CD4-positive, alpha-beta T cell (primary cell): ENCODE measurements at regions of chr1 and their contacts with region 1.

Region 1: GRCh38 chr1:241847796-241848685 is at the start of gene EXO1:
- DNase-seq: peak; percentile 75 to 95 (median 85)
- ATAC-seq: peak; percentile 96
- H3K4me3 ChIP-seq: peak within 1 kb of the TSS; percentile 98
- H3K4me3 Mint-ChIP-seq: peak within 1 kb of the TSS; percentile 99
- H3K27ac ChIP-seq: peak within 1 kb of the TSS; percentile 95 to 100
- H3K27ac Mint-ChIP-seq: peak within 1 kb of the TSS; percentile 99
- H3K4me1 ChIP-seq: peaks cover 12% of the 10 kb centered on the region
- H3K4me1 Mint-ChIP-seq: peaks cover 19% of the 10 kb centered on the region
- H3K27me3 ChIP-seq: no peaks in the 10 kb centered on the region
- H3K27me3 Mint-ChIP-seq: no peaks in the 10 kb centered on the region
- CTCF ChIP-seq: peak; percentile 47
- total RNA-seq, gene EXO1: 0.25 to 1.1 TPM

Region 2: DNA sequence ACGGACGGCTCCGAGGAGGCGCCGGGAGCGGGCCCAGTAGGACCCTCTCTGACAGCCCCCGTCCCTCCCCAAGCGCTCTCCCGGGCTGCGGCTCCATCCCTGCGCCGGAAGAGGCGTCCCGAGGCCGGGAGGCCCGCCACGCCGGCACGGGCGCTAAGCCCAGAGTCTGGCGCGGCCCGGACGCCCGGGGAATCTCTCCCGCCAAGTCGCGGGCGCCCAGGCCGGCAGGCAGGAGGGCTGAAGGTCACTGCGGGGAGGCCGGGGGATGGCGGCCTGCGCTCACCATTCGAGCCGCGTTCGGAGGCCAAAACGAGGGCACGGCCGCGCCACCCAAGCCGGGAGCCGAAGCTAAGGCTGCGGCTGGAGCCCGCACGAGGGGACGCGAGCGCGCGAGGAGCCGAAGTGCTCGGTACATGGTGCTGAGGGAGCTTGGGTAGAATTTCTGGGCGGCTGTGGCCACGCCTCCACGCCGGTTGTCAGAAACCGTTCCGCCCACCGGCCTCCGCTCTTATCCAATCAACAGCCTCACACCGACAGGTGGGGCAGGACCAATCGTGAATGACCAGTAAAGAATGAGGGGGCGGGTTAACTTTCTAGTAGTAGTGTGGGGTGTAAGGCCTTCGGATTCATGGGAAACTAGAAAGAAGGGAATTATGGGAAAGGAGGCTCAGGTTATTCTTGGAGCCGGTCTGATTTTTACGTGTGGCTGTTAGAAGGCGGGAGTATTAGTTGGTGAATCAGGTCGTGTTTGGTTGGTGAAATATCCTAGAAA is 328.5 kb before region 1 on chr1 and contains the start of gene FH:
- CTCF ChIA-PET with region 1: no interaction called
- POLR2A ChIA-PET with region 1: interaction called, 4 read pairs
- intact Hi-C with region 1: loop called (anchors 2 to 5 kb)
- DNase-seq: peak; percentile 82 to 98 (median 91)
- ATAC-seq: peak; percentile 97
- H3K4me3 ChIP-seq: peak within 1 kb of the TSS; percentile 64
- H3K4me3 Mint-ChIP-seq: peak within 1 kb of the TSS; percentile 97
- H3K27ac ChIP-seq: peak within 1 kb of the TSS in 1 of 2 donors; percentile 70
- H3K27ac Mint-ChIP-seq: peak within 1 kb of the TSS; percentile 85
- H3K4me1 ChIP-seq: peaks cover 5% of the 10 kb centered on the region
- H3K4me1 Mint-ChIP-seq: peaks cover 32% of the 10 kb centered on the region
- H3K27me3 ChIP-seq: peaks cover 8% of the 10 kb centered on the region in 2 experiments
- H3K27me3 Mint-ChIP-seq: peaks cover 25% of the 10 kb centered on the region
- CTCF ChIP-seq: no peak
- total RNA-seq, gene FH: 13.0 to 16.9 TPM

Region 3: GRCh38 chr1:241627453-241628259 is 220.4 kb before region 1 on chr1:
- CTCF ChIA-PET with region 1: no interaction called
- POLR2A ChIA-PET with region 1: interaction called, 4 read pairs
- intact Hi-C with region 1: loop called in 1 of 2 experiments (anchors 5 kb)
- DNase-seq: peak in 10 of 14 experiments; percentile 8 to 82 (median 40)
- ATAC-seq: peak; percentile 89
- H3K4me3 ChIP-seq: peak overlapping the region; percentile 30
- H3K4me3 Mint-ChIP-seq: peak overlapping the region; percentile 88
- H3K27ac ChIP-seq: peak overlapping the region; percentile 13 to 59
- H3K27ac Mint-ChIP-seq: peak overlapping the region; percentile 94
- H3K4me1 ChIP-seq: peaks cover 2% of the 10 kb centered on the region
- H3K4me1 Mint-ChIP-seq: peaks cover 24% of the 10 kb centered on the region
- H3K27me3 ChIP-seq: no peaks in the 10 kb centered on the region
- H3K27me3 Mint-ChIP-seq: no peaks in the 10 kb centered on the region
- CTCF ChIP-seq: peak; percentile 88

Region 4: GRCh38 chr1:241640029-241640818 is 207.8 kb before region 1 on chr1 and contains the starts of genes CHML and OPN3:
- CTCF ChIA-PET with region 1: interaction called, 3 read pairs
- POLR2A ChIA-PET with region 1: interaction called, 4 read pairs
- intact Hi-C with region 1: loop called in 1 of 2 experiments (anchors 1 kb)
- DNase-seq: peak; percentile 75 to 95 (median 89)
- ATAC-seq: peak; percentile 94
- H3K4me3 ChIP-seq: peak within 1 kb of the TSS; percentile 87
- H3K4me3 Mint-ChIP-seq: peak within 1 kb of the TSS; percentile 93
- H3K27ac ChIP-seq: peak within 1 kb of the TSS; percentile 55 to 58
- H3K27ac Mint-ChIP-seq: peak within 1 kb of the TSS; percentile 82
- H3K4me1 ChIP-seq: peaks cover 17% of the 10 kb centered on the region
- H3K4me1 Mint-ChIP-seq: peaks cover 39% of the 10 kb centered on the region
- H3K27me3 ChIP-seq: no peaks in the 10 kb centered on the region
- H3K27me3 Mint-ChIP-seq: no peaks in the 10 kb centered on the region
- CTCF ChIP-seq: no peak
- total RNA-seq, gene CHML: 9.1 to 10.3 TPM
- total RNA-seq, gene OPN3: 1.9 to 2.3 TPM

Region 5: GRCh38 chr1:241972703-241973369 is 124.8 kb after region 1 on chr1:
- CTCF ChIA-PET with region 1: no interaction called
- POLR2A ChIA-PET with region 1: no interaction called
- intact Hi-C with region 1: no loop called
- DNase-seq: no peak
- ATAC-seq: no peak
- H3K4me3 ChIP-seq: no peak overlapping the region
- H3K4me3 Mint-ChIP-seq: no peak overlapping the region
- H3K27ac ChIP-seq: no peak overlapping the region
- H3K27ac Mint-ChIP-seq: no peak overlapping the region
- H3K4me1 ChIP-seq: no peaks in the 10 kb centered on the region
- H3K4me1 Mint-ChIP-seq: no peaks in the 10 kb centered on the region
- H3K27me3 ChIP-seq: no peaks in the 10 kb centered on the region
- H3K27me3 Mint-ChIP-seq: no peaks in the 10 kb centered on the region
- CTCF ChIP-seq: no peak

Region 6: GRCh38 chr1:243264717-243265116 is 1416.7 kb after region 1 on chr1:
- CTCF ChIA-PET with region 1: no interaction called
- POLR2A ChIA-PET with region 1: no interaction called
- intact Hi-C with region 1: loop called in 1 of 2 experiments (anchors 5 kb)
- DNase-seq: peak in 1 of 14 experiments; percentile 25
- ATAC-seq: no peak
- H3K4me3 ChIP-seq: no peak overlapping the region
- H3K4me3 Mint-ChIP-seq: no peak overlapping the region
- H3K27ac ChIP-seq: no peak overlapping the region
- H3K27ac Mint-ChIP-seq: no peak overlapping the region
- H3K4me1 ChIP-seq: no peaks in the 10 kb centered on the region
- H3K4me1 Mint-ChIP-seq: peaks cover 46% of the 10 kb centered on the region
- H3K27me3 ChIP-seq: no peaks in the 10 kb centered on the region
- H3K27me3 Mint-ChIP-seq: no peaks in the 10 kb centered on the region
- CTCF ChIP-seq: no peak